ENCODE measurements at regions of chr12 and their contacts with region 1.

Region 1: DNA sequence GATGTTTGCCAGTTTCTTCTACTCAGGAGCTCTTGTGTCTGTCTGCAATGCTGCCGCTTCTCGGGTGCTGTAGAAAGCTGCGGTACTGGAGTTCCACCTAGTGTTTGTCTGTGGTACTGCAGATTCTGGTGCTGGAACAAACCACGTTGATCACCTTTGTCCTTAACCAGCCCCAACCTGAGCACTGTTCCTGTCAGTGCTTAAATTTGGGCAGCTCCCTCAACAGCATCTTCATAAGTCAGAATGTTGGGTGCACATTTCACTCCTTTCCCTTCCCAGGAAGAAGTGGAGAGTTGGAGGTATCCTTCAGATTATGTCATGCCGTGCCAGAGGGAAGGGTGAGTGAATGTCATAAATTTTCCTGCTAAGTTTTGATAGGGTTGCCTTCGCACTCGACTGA is 48.7 kb upstream of the LALBA start:
- DNase-seq: peak; percentile 33 to 88 (median 62)
- ATAC-seq: peak; percentile 71 to 91 (median 84)
- H3K4me3 ChIP-seq: no peak overlapping the region
- H3K4me3 Mint-ChIP-seq: no peak overlapping the region
- H3K27ac ChIP-seq: no peak overlapping the region
- H3K27ac Mint-ChIP-seq: peak overlapping the region in 1 of 2 donors; percentile 3
- H3K4me1 ChIP-seq: no peaks in the 10 kb centered on the region
- H3K4me1 Mint-ChIP-seq: peaks cover 0 to 4% (median 0%) of the 10 kb centered on the region in 3 donors
- H3K27me3 ChIP-seq: peaks cover 2 to 19% of the 10 kb centered on the region in 2 experiments
- H3K27me3 Mint-ChIP-seq: peaks cover 33 to 40% of the 10 kb centered on the region in 2 donors

Region 2: DNA sequence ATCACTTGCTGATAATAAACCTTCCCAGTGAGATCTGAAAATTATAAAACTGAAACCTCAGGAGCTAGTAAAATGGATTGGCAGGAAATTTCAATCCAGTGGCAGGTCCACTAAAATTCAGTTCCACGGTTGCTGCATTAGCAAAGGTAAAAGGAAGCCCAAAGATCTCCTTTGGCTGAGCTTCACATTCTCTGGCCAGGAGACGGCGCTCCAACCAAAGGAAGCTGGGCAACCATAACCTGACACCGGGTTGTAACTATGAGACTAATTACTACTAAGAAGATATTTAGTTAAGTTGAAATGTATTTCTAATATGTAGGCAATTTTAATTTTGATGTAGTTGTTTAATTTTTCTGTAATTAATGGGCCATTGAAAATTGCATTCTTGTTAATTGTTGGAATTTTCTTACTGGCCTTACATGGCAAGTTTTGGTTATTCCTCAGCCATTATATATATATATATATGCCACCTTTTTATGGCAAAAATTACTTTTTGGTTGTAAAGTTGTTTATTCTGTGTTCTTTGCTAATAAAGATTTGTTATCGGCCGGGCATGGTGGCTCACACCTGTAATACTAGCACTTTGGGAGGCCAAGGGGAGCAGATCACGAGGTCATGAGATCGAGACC is 76.1 kb before region 1 on chr12:
- CTCF ChIA-PET with region 1: interaction called, 10 to 29 read pairs
- POLR2A ChIA-PET with region 1: no interaction called
- DNase-seq: peak in 27 of 35 experiments; percentile 4 to 47 (median 30)
- ATAC-seq: no peak
- H3K4me3 ChIP-seq: no peak overlapping the region
- H3K4me3 Mint-ChIP-seq: no peak overlapping the region
- H3K27ac ChIP-seq: no peak overlapping the region
- H3K27ac Mint-ChIP-seq: no peak overlapping the region
- H3K4me1 ChIP-seq: no peaks in the 10 kb centered on the region
- H3K4me1 Mint-ChIP-seq: peaks cover 0 to 4% (median 0%) of the 10 kb centered on the region in 3 donors
- H3K27me3 ChIP-seq: peaks cover 6 to 9% of the 10 kb centered on the region in 2 experiments
- H3K27me3 Mint-ChIP-seq: peaks cover 0 to 2% of the 10 kb centered on the region in 2 donors